Activated T-helper 1 cell treated with anti-CD3 and anti-CD28 coated beads, Interleukin-12 subunit alpha, Interleukin-12 subunit beta, Interleukin-2, Interleukin-4 antibody, amounts not matched to agents 30 ng/mL and 10 ng/mL and 1 ng/mL, durations not matched to agents 14 hours and 24 hours and 36 hours (primary cell): ENCODE measurements at regions of chr10 and their contacts with region 1.

Region 1: DNA sequence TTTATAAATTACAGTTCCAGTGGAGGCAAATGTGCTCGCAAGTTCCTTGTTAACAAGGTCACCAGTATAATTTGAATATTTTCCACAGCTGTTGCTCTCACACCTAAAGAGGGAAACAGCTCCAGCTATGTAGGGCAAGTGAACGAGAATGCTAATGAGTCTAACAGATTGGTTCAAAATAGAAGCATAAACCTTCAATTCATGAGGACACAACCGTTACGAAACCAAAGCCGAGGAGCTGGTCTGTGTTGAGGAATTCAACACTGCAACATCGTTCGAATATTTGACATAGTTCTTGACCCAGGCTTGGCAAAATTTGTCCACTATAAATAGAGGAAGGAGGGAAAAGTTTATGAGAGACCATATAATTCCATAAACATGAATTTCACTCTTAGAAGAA is 161.3 kb downstream of the KLF6 start:
- DNase-seq: no peak
- H3K4me3 Mint-ChIP-seq: no peak overlapping the region
- H3K27ac Mint-ChIP-seq: peak overlapping the region; percentile 89
- H3K4me1 Mint-ChIP-seq: peaks cover 35% of the 10 kb centered on the region
- H3K27me3 Mint-ChIP-seq: peaks cover 8% of the 10 kb centered on the region

Region 2: GRCh38 chr10:3095373-3096139 is 528.2 kb before region 1 on chr10:
- intact Hi-C with region 1: loop called (anchors 1 kb)
- DNase-seq: peak; percentile 57
- H3K4me3 Mint-ChIP-seq: peak overlapping the region; percentile 69
- H3K27ac Mint-ChIP-seq: peak overlapping the region; percentile 97
- H3K4me1 Mint-ChIP-seq: peaks cover 70% of the 10 kb centered on the region
- H3K27me3 Mint-ChIP-seq: no peaks in the 10 kb centered on the region

Region 3: DNA sequence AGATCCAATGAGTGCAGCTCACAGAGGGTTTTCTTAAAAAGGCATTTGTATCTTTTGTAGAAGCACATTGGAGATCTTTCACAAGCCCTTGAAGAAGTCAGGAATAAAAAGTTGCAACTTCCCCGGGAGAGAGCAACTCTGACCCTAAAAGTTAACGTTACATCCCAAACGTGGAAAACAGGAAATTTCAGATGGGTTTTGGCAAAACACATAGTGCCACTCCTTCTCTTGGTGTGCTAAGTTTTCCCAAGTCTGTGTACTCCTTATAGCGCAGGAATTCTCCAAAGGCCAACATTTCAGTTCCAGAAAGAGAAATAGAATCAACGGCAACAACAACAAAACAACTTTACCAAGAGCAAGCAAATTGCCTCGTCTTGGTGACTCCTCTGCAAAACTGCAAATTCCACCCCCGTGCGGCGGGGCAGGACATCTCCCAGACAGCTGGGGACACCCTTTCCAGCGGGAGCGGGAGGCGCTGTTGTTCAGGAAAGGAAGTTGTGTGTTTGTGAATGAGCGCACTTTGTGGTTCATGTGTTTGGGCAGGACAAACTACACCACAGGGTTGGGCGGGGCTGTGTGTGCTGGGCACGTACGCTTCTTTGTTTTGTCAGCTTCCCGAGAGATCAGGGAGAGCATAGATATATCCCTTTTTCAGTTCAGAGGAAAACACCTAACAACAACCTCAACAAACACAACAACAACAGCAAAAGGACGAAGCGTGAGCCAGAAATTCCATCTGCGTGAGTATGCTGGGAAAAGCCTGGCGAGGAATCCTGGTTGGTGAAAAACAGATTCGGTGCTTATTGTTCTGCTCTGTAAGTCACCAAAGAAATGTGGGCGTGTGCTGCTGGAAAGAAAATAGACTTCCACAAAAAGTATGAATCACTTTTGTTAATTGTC is 156.4 kb before region 1 on chr10:
- intact Hi-C with region 1: loop called (anchors 1 kb)
- DNase-seq: no peak
- H3K4me3 Mint-ChIP-seq: peak overlapping the region; percentile 62
- H3K27ac Mint-ChIP-seq: peak overlapping the region; percentile 90
- H3K4me1 Mint-ChIP-seq: peaks cover 53% of the 10 kb centered on the region
- H3K27me3 Mint-ChIP-seq: no peaks in the 10 kb centered on the region

Region 4: DNA sequence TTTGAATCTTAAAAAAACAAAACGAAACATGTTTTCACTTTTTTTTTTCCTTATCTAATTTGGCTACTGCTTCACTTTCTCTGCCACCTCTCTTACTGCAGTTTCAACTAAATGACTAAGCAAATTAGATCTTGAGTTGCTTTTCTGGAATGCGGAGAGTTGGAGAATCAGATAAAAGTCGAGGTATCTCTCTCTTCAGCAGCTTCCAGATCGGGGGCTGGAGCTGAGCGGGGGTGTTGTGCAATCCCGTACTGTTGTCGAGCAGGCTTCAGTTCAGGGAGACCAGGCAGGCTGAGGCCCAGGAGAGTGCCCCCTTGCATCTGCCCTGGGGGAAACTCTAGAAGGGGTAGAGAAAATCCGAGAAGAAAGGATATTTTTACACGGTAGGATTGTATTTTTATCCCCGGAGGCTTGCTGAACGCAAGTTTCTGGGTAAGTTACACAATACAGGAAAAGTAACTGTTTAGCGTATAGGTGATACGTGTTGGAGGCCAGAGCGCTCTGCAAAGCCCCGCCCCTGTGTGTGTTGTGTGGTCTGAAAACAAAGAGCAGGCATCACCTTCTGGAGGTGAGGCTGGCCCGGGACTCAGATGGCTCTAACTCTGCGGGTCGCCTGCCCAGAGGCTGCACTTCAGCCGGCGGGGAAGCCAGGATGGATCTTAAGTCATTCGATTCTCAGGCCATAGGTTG is 44.7 kb after region 1 on chr10:
- intact Hi-C with region 1: loop called (anchors 1 kb)
- DNase-seq: peak; percentile 55
- H3K4me3 Mint-ChIP-seq: peak overlapping the region; percentile 82
- H3K27ac Mint-ChIP-seq: peak overlapping the region; percentile 89
- H3K4me1 Mint-ChIP-seq: peaks cover 44% of the 10 kb centered on the region
- H3K27me3 Mint-ChIP-seq: peaks cover 3% of the 10 kb centered on the region

Region 5: GRCh38 chr10:3776796-3777571 is 153.2 kb after region 1 on chr10:
- intact Hi-C with region 1: loop called (anchors 1 kb)
- DNase-seq: peak; percentile 60
- H3K4me3 Mint-ChIP-seq: peak overlapping the region; percentile 37
- H3K27ac Mint-ChIP-seq: peak overlapping the region; percentile 53
- H3K4me1 Mint-ChIP-seq: peaks cover 81% of the 10 kb centered on the region
- H3K27me3 Mint-ChIP-seq: no peaks in the 10 kb centered on the region

Region 6: DNA sequence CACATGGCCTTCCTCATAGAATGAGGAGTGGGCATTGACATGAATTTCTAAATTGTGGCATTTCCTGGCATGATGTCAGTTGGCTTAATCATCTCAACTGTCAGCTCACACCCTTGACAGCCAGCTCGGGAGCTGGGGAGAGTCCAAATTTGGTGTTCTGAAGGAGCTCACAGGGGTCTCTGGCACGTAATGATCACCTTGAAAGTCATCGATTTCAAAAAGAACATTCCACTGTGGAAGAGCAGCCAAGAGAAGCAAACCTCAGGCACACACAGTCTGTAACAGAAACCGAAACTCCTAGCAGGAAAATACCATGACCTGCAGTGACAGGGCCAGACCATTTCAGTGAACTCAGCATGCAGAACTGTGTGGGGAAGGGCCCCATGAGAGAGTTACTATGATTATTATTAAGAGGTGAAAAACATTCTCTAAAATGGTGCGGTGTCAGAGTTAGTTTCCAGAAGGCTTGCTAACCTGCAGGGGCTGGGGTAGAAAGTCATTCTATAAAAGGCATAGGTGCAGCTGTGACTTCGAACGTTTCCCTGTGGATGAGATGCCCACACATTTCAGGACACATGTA is 187.6 kb after region 1 on chr10:
- intact Hi-C with region 1: loop called (anchors 1 kb)
- DNase-seq: peak; percentile 61
- H3K4me3 Mint-ChIP-seq: peak overlapping the region; percentile 60
- H3K27ac Mint-ChIP-seq: peak overlapping the region; percentile 99
- H3K4me1 Mint-ChIP-seq: peaks cover 85% of the 10 kb centered on the region
- H3K27me3 Mint-ChIP-seq: no peaks in the 10 kb centered on the region

Region 7: DNA sequence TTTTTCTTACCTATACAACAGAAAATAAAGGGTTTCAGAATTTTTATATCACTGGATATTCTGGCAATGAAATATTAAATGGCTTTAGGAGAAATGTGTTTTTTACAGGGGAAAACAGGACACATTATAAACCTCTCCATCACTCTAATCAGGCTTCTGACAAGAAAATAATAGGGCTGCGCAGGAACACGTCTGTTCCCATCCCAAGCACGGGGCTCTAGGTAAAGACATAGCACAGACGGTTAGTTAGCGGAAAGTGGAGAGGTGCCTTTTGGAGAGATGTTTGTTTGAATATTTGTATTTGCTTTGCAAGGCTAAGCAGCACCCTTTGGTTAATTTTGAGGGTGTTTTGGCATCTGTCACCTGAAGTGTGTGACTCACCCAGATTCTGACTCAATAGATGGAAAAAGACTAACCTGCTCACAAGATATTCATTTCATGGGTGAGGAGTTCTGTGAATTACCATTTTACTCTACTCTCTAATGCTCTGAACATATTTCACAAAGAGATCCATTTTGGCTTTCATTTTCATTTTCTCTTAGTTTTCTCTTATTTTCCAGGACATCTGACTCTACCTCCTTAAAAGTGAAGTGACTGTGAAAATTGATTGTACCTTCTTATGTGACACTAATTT is 1027.8 kb after region 1 on chr10:
- intact Hi-C with region 1: loop called (anchors 1 kb)
- DNase-seq: no peak
- H3K4me3 Mint-ChIP-seq: peak overlapping the region; percentile 8
- H3K27ac Mint-ChIP-seq: peak overlapping the region; percentile 85
- H3K4me1 Mint-ChIP-seq: peaks cover 32% of the 10 kb centered on the region
- H3K27me3 Mint-ChIP-seq: peaks cover 3% of the 10 kb centered on the region